Esophagus muscularis mucosa (tissue), 4 donors: ENCODE measurements at regions of chr4 and their contacts with region 1.

Region 1: GRCh38 chr4:170853422-170854021 is 763.8 kb upstream of the AADAT start:
- DNase-seq: no peak
- H3K4me3 ChIP-seq: no peak overlapping the region
- H3K27ac ChIP-seq: no peak overlapping the region
- H3K4me1 ChIP-seq: no peaks in the 10 kb centered on the region
- H3K27me3 ChIP-seq: no peaks in the 10 kb centered on the region
- CTCF ChIP-seq: peak; percentile 34 to 68 (median 59)
- EP300 ChIP-seq: no peak
- POLR2A ChIP-seq: no peak

Region 2: DNA sequence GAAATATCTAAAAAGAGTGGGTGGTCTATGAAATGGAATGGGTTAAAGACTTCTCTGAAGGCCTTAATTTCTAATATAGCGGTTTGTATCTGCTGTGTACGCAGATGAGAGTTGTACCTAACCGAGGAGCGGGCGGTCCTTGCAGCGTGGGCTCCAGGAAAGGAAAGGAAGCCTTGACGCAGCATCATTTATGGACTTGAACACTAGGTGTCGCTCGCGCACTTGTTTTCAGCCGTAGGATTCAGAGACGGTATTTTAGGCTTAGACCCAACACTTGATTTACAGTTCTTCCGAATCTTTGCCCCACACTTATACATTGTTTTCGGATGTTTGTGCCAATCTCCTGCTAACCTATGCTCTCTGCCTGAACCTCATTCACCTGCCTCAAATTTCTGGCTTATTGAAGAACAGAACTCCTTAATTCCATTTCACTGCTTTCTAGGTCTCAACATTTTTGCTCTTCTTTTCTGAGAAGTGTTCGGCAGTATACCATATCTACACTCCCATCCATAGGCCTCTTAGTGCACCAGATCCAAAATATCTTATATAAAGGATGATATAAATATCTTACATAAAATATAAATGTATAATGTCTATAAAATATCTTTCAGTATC is 714.8 kb before region 1 on chr4:
- intact Hi-C with region 1: loop called (anchors 5 kb)
- DNase-seq: no peak
- H3K4me3 ChIP-seq: peak overlapping the region in 1 of 4 donors; percentile 20
- H3K27ac ChIP-seq: no peak overlapping the region
- H3K4me1 ChIP-seq: peaks cover 0 to 8% (median 1%) of the 10 kb centered on the region in 4 donors
- H3K27me3 ChIP-seq: no peaks in the 10 kb centered on the region
- CTCF ChIP-seq: peak; percentile 55 to 80 (median 76)
- EP300 ChIP-seq: no peak
- POLR2A ChIP-seq: no peak